Heart left ventricle (tissue), 16 donors: ENCODE measurements at regions of chr11 and their contacts with region 1.

Region 1: DNA sequence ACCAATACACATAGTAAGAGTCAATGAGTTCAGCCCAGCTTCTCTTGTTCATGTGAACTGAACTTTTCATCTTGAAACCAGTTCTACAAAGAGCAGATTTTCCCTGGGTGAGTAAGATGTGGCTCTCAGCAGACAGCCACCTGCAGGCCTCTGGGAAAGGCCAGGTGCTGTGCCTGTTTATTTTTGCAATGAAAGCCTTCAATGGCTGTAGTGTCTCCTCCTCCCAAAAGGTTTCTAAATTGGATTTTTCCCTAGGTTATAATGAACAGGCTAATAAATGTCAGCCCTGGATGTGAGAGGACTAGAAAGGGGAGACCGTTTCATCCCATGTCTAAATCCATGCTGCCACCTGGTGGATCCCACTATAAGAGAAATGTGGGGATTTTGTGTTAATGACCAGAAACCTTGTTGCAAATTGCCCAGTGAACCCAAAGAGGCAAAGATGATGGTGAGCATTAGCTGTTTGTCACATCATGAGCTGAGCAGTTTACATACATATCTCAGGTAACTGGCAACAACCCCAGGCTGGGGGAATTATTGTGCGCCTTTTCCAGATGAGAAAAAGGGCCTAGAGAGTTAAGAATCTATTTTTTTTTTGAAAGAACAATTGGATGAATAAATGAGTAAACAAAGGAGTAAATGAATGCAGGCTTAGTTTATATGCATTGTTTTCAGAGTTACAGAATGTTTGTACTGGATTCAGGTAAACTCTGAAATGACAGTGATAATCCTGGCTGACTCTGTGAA is 12.7 kb downstream of the C11orf91 start:
- DNase-seq: no peak
- ATAC-seq: no peak
- H3K4me3 ChIP-seq: no peak overlapping the region
- H3K27ac ChIP-seq: peak overlapping the region in 2 of 12 donors; percentile 80 to 87
- H3K4me1 ChIP-seq: peaks cover 10 to 46% (median 37%) of the 10 kb centered on the region in 12 donors
- H3K27me3 ChIP-seq: no peaks in the 10 kb centered on the region
- CTCF ChIP-seq: peak; percentile 45 to 81 (median 74)
- POLR2A ChIP-seq: no peak

Region 2: DNA sequence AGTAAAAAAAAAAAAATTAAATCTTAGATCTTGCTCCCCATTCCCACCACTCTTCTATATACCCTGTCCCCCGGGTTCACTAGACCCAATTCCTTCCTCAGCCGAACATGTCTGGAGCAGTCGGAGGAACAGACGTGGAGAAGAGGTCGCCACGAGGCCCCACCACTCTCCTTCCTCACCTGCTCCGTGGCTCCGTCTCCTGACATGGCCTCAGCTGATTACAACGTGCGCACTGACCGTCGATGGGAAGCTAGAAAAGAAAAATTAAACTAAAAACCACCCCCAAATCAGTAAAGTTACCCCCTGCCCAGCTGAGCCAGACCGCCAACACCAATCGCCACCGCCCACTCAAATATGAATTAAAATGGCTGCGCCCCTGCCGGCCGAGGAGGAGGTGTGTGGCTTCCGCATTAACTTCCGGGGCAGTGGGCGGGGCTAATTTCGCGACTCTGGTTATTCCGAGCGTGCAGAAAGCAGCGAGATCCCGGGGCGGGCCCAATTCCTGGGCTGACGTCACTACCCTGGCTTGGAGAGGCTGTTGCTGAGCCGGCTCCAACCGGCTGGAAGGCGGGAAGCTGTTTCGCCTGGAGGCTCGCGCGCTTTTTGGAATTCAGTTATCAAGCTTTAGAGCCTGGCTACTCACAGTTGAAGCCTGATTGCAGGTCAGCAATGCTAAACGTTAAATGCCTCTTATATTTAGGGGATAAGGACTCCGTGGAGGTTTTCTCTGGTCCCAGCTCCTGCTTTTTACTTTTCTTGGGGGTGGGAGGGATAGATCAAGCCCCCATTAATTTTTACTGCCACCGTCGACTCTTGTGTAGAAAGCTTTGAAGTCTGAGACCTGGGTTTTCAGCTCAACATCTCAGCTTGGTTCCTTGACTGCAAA is 526.5 kb before region 1 on chr11 and contains the start of gene CSTF3:
- intact Hi-C with region 1: loop called (anchors 2 to 10 kb)
- DNase-seq: peak; percentile 100
- ATAC-seq: peak; percentile 98 to 100 (median 99)
- H3K4me3 ChIP-seq: peak within 1 kb of the TSS; percentile 60 to 94 (median 78)
- H3K27ac ChIP-seq: peak within 1 kb of the TSS in 11 of 12 donors; percentile 58 to 90 (median 75)
- H3K4me1 ChIP-seq: peaks cover 4 to 43% (median 19%) of the 10 kb centered on the region in 12 donors
- H3K27me3 ChIP-seq: no peaks in the 10 kb centered on the region
- CTCF ChIP-seq: peak; percentile 33 to 70 (median 60)
- POLR2A ChIP-seq: peak in 1 of 2 donors; percentile 57
- total RNA-seq, gene CSTF3: 5.9 to 15.6 (median 13.2) TPM

Region 3: GRCh38 chr11:33257897-33258630 is 429.8 kb before region 1 on chr11:
- intact Hi-C with region 1: loop called in 3 of 10 experiments (anchors 1 to 10 kb)
- DNase-seq: peak; percentile 91 to 95 (median 92)
- ATAC-seq: peak; percentile 60 to 89 (median 86)
- H3K4me3 ChIP-seq: peak overlapping the region; percentile 78 to 95 (median 94)
- H3K27ac ChIP-seq: peak overlapping the region; percentile 99 to 100 (median 100)
- H3K4me1 ChIP-seq: peaks cover 4 to 52% (median 33%) of the 10 kb centered on the region in 12 donors
- H3K27me3 ChIP-seq: no peaks in the 10 kb centered on the region
- CTCF ChIP-seq: peak in 11 of 12 donors; percentile 5 to 56 (median 34)
- POLR2A ChIP-seq: peak in 1 of 2 donors; percentile 71

Region 4: GRCh38 chr11:33542921-33543320 is 145.0 kb before region 1 on chr11:
- intact Hi-C with region 1: loop called (anchors 1 to 5 kb)
- DNase-seq: peak in 3 of 5 donors; percentile 36 to 44 (median 40)
- ATAC-seq: peak in 2 of 4 donors; percentile 46
- H3K4me3 ChIP-seq: no peak overlapping the region
- H3K27ac ChIP-seq: no peak overlapping the region
- H3K4me1 ChIP-seq: peaks cover 0 to 16% (median 2%) of the 10 kb centered on the region in 12 donors
- H3K27me3 ChIP-seq: peaks cover 0 to 3% (median 0%) of the 10 kb centered on the region in 9 donors
- CTCF ChIP-seq: peak; percentile 38 to 63 (median 56)
- POLR2A ChIP-seq: no peak

Region 5: GRCh38 chr11:33736148-33736809 is 48.4 kb after region 1 on chr11 and contains the start of gene CD59:
- intact Hi-C with region 1: loop called in 4 of 10 experiments (anchors 2 to 5 kb)
- DNase-seq: peak; percentile 98
- ATAC-seq: peak; percentile 94 to 96 (median 96)
- H3K4me3 ChIP-seq: peak within 1 kb of the TSS; percentile 75 to 98 (median 92)
- H3K27ac ChIP-seq: peak within 1 kb of the TSS; percentile 93 to 100 (median 98)
- H3K4me1 ChIP-seq: peaks cover 4 to 51% (median 41%) of the 10 kb centered on the region in 12 donors
- H3K27me3 ChIP-seq: no peaks in the 10 kb centered on the region
- CTCF ChIP-seq: peak in 1 of 12 donors; percentile 19
- POLR2A ChIP-seq: peak; percentile 80 to 98
- total RNA-seq, gene CD59: 588 to 1,434 (median 930) TPM

Region 6: DNA sequence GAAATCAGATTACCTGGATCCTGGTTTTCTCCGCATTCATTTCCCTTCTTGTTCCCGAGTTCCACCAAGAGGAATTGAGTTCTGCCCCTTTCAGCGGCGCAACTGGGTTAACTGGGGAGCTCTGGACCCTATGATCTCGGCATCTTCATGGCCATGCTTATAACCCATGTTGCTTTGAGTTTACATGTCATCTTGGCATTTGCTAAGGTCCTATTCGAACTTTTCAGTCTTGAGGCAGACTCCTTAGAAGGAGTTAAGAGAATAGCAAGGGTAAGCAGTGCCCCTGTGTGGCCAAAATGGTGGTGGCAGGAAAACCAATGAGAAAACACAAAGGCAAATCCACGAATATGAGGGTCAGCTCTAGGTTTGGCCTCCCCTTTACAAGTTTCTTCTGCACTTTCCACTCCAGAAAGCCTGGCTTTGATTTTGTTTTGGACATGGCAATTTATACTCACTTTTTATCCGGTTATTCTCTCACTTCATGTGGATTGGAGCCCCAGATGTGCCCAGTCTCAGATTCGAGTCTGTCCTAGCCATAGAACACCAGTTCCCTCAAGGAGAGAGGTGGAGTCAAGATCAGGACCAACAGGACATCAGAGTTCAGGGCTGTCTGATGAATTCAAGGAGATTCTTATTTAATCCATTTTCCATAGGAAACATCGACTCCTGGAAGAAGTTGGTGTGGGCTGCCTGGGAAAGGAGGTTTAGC is 141.7 kb after region 1 on chr11:
- intact Hi-C with region 1: loop called in 1 of 10 experiments (anchors 10 kb)
- DNase-seq: peak in 4 of 5 donors; percentile 35 to 52 (median 46)
- ATAC-seq: peak in 3 of 4 donors; percentile 82 to 91 (median 86)
- H3K4me3 ChIP-seq: peak overlapping the region; percentile 21 to 58 (median 49)
- H3K27ac ChIP-seq: no peak overlapping the region
- H3K4me1 ChIP-seq: peaks cover 3 to 10% (median 7%) of the 10 kb centered on the region in 12 donors
- H3K27me3 ChIP-seq: peaks cover 0 to 49% (median 11%) of the 10 kb centered on the region in 9 donors
- CTCF ChIP-seq: peak; percentile 56 to 85 (median 76)
- POLR2A ChIP-seq: no peak